A549 (cell line): ENCODE measurements at regions of chr1 and their contacts with region 1.

Region 1: DNA sequence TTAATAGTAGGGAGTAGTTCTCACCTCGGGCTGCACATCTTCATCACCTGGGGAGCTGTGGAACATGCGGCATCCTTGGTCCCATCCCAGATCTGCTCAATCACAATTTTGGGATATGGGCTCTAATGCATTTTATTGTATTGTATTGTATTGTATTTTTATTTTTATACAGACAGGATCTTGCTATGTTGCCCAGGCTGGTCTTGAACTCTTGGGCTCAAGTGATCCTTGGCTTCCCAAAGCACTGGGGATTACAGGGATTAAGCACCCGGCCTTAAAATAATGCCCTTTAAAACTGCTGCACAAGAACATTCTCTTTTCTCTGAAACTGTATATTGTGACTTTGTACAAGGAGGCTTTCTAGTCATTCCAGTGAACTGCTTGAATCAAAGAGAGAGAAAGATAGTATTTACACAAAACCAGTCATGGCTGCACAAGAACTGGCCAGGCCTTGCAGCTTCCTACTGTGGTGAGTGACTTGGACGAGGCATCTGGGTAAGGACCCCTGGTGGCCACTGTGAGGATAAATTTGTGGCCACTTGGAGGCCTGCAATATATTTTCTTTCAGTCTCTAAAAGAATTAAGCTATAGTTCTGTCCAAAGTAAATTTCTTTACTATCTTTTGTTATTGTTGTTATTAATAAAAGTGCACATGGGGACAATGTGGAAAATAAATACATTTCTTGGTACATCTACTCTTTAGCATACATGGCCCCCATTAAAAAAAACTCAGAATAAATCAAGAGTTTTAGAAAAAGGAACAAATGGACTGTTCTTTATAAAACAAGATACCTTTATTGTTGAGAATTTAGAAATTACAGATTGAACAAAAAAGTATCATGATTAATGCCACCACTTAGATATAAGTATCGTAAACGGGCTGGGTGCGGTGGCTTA is 48.0 kb downstream of the TBCE start:
- DNase-seq: peak; percentile 81 to 90
- ATAC-seq: peak; percentile 81 to 84
- H3K4me3 ChIP-seq: no peak overlapping the region
- H3K27ac ChIP-seq: peak overlapping the region; percentile 31 to 61; a peak in 5 of 6 replicates
- H3K4me1 ChIP-seq: peaks cover 38% of the 10 kb centered on the region
- CTCF ChIP-seq: peak; percentile 85
- EP300 ChIP-seq: no peak
- POLR2A ChIP-seq: no peak
- RAD21 ChIP-seq: peak; percentile 78 to 82

Region 2: DNA sequence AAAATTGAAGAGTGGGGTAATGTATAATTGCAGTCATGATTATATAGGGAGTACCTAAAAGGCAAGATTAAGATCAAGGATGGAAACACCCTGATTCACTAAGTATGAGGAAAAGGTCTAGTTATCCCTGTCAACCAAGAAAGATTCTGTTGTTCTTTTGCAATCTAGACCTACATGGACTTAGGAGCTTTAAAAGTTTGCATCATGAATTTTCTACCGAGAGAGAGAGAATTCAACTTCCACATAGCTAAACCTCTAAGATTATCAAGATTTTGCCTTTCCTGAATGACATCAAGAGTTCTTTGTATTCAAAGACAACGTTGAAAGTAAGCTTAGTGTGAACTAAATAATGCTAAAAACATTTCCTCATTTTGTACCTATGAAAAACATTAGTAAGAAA is 175.4 kb before region 1 on chr1:
- CTCF ChIA-PET with region 1: interaction called, 11 read pairs
- POLR2A ChIA-PET with region 1: no interaction called
- DNase-seq: no peak
- ATAC-seq: no peak
- H3K4me3 ChIP-seq: no peak overlapping the region
- H3K27ac ChIP-seq: no peak overlapping the region
- H3K4me1 ChIP-seq: peaks cover 10% of the 10 kb centered on the region; the same call in 2 of the 3 replicates
- CTCF ChIP-seq: no peak
- EP300 ChIP-seq: no peak
- POLR2A ChIP-seq: no peak
- RAD21 ChIP-seq: no peak

Region 3: GRCh38 chr1:235259133-235259778 is 156.0 kb before region 1 on chr1:
- CTCF ChIA-PET with region 1: interaction called, 27 read pairs
- POLR2A ChIA-PET with region 1: no interaction called
- DNase-seq: no peak
- ATAC-seq: peak in 1 of 2 experiments; percentile 47; a peak in 3 of 6 replicates
- H3K4me3 ChIP-seq: no peak overlapping the region
- H3K27ac ChIP-seq: no peak overlapping the region
- H3K4me1 ChIP-seq: no peaks in the 10 kb centered on the region
- CTCF ChIP-seq: no peak
- EP300 ChIP-seq: no peak
- POLR2A ChIP-seq: no peak
- RAD21 ChIP-seq: no peak

Region 4: DNA sequence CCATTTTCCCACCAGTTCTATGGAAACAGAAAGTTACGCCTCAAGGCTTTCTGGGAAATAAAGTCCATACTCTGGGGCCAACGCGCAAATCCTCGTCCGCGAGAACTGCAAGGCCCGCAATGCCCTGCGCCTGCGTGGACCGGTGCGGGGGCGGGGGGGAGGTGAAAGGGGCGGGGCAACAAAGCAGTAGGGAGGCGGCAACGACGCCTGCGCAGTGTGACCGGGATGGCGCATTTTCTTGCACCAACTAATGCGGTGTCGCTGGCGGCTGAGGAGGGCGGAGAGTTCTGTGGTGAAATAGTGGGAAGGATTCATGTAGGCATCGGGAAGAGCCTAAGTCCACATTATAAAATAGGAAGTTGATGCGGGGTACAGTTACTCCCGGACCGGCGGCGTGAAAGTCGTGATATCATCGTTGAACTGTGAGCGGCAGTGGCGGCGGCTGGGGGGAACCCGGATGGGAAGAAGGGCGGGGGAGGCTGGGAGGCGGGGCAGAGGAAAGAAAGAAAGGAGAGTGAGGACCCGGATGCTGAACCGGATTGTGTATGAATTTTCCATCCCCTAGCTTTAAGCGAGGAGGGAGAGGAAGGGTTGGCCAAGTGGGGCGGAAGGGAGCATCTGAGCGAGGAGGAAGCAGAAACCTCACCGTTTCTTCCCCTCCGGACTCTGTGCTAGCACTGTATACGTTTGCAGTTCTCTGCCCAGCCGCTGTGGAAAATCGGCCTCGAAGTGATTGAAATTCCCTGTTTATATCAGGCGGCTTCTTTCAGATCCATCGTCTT is 86.7 kb before region 1 on chr1 and contains the start of gene GGPS1:
- CTCF ChIA-PET with region 1: interaction called, 37 read pairs
- POLR2A ChIA-PET with region 1: interaction called, 14 read pairs
- DNase-seq: peak; percentile 94 to 100
- ATAC-seq: peak; percentile 85 to 87
- H3K4me3 ChIP-seq: peak within 1 kb of the TSS; percentile 96
- H3K27ac ChIP-seq: peak within 1 kb of the TSS; percentile 88 to 94
- H3K4me1 ChIP-seq: peaks cover 48% of the 10 kb centered on the region
- CTCF ChIP-seq: 0 out of 3 replicates have a peak, but pooled peaks have one; percentile 12
- EP300 ChIP-seq: no peak
- POLR2A ChIP-seq: peak; percentile 78
- RAD21 ChIP-seq: 0 out of 5 replicates have a peak, but pooled peaks of 1 of the 2 experiments have one; percentile 1
- polyA plus RNA-seq, gene GGPS1: 57.7 and 58.5 TPM in 2 replicates

Region 5: DNA sequence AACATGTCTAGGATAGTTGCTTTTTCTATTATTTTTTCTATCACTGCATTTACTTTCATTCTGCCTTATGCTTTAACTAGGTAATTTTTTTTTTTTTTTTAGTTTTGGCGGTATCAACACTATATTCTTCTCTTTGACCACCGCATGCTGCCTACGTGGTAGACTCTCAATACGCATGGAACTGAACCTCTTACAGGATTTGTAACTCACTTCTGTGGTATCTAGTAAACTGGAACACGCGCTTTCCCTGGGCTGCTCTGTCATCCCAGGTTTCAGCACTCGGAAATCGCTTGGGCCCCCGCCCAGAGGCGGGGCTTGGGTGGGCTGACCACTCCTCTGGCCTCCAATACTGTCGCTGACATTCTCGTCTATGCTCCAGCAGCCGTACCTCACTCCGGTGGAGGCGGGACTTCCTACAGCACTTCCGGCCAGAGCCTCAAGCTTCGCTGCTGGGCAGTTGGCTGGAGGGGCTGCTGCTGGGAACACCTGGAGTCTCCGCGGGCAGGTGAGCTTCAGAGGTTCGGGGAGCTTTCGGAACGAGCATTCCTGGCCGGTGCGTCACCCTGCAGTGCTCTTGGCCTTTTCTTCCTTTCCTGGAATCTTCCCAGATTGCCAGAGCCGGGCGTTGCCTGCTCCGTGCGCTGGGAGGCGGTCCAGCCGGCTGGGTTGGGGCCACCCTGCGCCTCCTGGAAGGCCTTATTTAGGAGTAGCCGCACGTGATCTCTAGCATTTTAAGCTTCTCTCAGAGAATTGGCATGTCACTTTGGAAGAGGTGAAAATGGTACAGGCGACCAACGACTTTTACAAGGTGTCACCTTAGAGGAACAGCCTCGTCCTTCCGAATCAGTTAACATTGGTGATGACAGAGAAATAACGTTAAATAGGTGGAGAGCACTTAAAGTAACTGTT is 48.0 kb before region 1 on chr1 and contains the start of gene TBCE:
- CTCF ChIA-PET with region 1: interaction called, 16 read pairs
- POLR2A ChIA-PET with region 1: interaction called, 5 read pairs
- DNase-seq: peak; percentile 96 to 97
- ATAC-seq: peak; percentile 100
- H3K4me3 ChIP-seq: peak within 1 kb of the TSS; percentile 65
- H3K27ac ChIP-seq: peak within 1 kb of the TSS; percentile 84 to 95
- H3K4me1 ChIP-seq: peaks cover 4% of the 10 kb centered on the region; the same call in 1 of the 3 replicates
- CTCF ChIP-seq: no peak; the same call in 2 of the 3 replicates
- EP300 ChIP-seq: no peak
- POLR2A ChIP-seq: peak; percentile 96
- RAD21 ChIP-seq: peak in 1 of 2 experiments; percentile 24; a peak in 3 of 5 replicates
- polyA plus RNA-seq, gene TBCE: 58.3 and 65.2 TPM in 2 replicates

Region 6: DNA sequence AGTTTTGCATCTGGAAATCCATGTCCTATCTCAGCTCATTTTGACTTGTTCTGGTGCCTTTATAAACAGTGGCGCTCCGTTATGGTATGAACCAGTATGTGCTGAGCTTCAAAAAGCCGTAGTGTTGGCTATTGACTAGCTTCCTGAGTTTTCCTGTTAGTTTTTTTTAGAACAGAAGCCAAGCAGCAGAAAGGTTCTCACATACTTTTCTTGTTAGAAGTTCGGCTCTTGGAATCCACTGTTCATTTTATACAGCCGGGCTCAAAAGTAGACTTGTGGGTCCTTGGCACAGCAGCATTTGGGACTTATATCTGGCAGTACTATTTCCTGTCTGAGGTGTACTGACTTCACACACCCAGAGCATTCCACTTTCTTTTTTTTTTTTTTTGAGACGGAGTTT is 15.7 kb after region 1 on chr1:
- CTCF ChIA-PET with region 1: interaction called, 29 read pairs
- POLR2A ChIA-PET with region 1: no interaction called
- DNase-seq: no peak
- ATAC-seq: no peak
- H3K4me3 ChIP-seq: no peak overlapping the region
- H3K27ac ChIP-seq: no peak overlapping the region
- H3K4me1 ChIP-seq: peaks cover 4% of the 10 kb centered on the region; the same call in 2 of the 3 replicates
- CTCF ChIP-seq: no peak
- EP300 ChIP-seq: no peak
- POLR2A ChIP-seq: no peak
- RAD21 ChIP-seq: no peak